Calu3 (cell line): ENCODE measurements at regions of chr1 and their contacts with region 1.

Region 1: GRCh38 chr1:243343970-243344937 is 88.4 kb downstream of the SDCCAG8 start:
- DNase-seq: peak; percentile 6
- H3K4me3 Mint-ChIP-seq: no peak overlapping the region
- H3K27ac Mint-ChIP-seq: no peak overlapping the region
- H3K4me1 Mint-ChIP-seq: peaks cover 9% of the 10 kb centered on the region
- H3K27me3 Mint-ChIP-seq: no peaks in the 10 kb centered on the region
- CTCF ChIP-seq: peak; percentile 43

Region 2: DNA sequence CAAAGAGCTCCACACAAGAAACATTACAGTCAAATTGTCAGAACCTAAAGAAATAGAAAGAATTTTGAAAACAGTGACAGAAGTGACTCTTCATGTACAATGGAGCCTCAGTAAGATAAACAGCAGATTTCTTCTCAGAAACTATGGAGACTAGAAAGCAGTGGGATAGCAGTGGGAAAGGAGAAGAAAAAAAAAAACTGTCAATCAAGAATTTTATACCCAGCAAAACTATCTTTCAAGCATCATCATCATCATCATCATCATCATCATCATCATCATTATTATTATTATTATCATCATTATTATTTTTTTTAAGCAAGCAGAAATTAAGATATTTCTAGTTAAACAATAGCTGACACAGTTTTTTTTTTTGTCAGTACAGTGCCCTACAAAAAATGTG is 113.3 kb before region 1 on chr1:
- CTCF ChIA-PET with region 1: no interaction called
- intact Hi-C with region 1: no loop called
- DNase-seq: no peak
- H3K4me3 Mint-ChIP-seq: no peak overlapping the region
- H3K27ac Mint-ChIP-seq: no peak overlapping the region
- H3K4me1 Mint-ChIP-seq: no peaks in the 10 kb centered on the region
- H3K27me3 Mint-ChIP-seq: no peaks in the 10 kb centered on the region
- CTCF ChIP-seq: no peak

Region 3: GRCh38 chr1:243409284-243409683 is 65.0 kb after region 1 on chr1:
- CTCF ChIA-PET with region 1: interaction called, 32 read pairs
- intact Hi-C with region 1: loop called (anchors 1 kb)
- DNase-seq: peak; percentile 37
- H3K4me3 Mint-ChIP-seq: no peak overlapping the region
- H3K27ac Mint-ChIP-seq: no peak overlapping the region
- H3K4me1 Mint-ChIP-seq: peaks cover 13% of the 10 kb centered on the region
- H3K27me3 Mint-ChIP-seq: no peaks in the 10 kb centered on the region
- CTCF ChIP-seq: peak; percentile 33

Region 4: DNA sequence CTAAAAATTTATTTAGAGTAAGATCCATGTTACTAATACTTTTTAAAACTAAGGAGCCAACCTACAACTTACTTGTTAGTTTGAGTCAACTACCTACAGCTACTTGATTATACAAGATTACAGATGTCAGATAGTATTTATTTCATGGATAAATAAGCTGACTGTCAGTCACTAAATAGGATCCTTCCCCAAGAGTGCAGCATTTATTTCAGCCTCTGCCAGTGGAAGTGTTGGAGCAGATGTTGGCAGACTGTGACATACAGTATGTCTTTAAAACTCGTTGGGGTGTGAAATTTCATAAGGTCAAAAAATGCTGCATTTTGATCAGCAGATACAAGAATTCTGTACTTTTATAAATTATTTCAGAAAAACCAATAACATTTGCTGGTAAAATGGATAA is 349.5 kb after region 1 on chr1:
- CTCF ChIA-PET with region 1: no interaction called
- intact Hi-C with region 1: loop called (anchors 10 kb)
- DNase-seq: no peak
- H3K4me3 Mint-ChIP-seq: no peak overlapping the region
- H3K27ac Mint-ChIP-seq: no peak overlapping the region
- H3K4me1 Mint-ChIP-seq: no peaks in the 10 kb centered on the region
- H3K27me3 Mint-ChIP-seq: no peaks in the 10 kb centered on the region
- CTCF ChIP-seq: no peak

Region 5: DNA sequence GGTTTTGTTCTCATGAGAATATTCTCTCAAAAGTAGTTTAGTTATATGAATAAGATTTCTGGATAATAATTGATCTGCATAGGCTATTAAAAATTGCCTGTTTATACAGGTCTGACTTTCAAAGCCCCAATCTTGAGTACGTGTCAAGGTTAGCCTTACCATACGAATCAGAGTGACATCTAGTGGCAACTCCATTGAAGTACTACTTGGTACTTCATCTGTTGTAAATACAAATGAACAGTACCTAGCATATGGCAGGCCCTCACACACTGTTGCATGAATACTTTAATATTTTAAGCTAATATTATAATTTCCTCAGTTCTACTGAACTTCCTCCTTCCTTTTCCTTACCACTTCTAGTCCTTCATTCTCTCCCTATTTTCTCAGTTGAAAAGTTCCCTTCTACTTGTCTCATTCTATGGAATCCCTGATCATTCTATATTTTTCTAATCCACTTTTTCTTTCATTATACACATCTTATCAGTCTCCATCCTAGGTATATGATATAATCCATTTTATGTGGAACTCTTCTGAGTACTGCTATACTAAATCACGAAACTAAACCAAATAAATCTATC is 404.5 kb after region 1 on chr1:
- CTCF ChIA-PET with region 1: no interaction called
- intact Hi-C with region 1: loop called (anchors 2 kb)
- DNase-seq: peak; percentile 45
- H3K4me3 Mint-ChIP-seq: no peak overlapping the region
- H3K27ac Mint-ChIP-seq: no peak overlapping the region
- H3K4me1 Mint-ChIP-seq: no peaks in the 10 kb centered on the region
- H3K27me3 Mint-ChIP-seq: no peaks in the 10 kb centered on the region
- CTCF ChIP-seq: peak; percentile 67

Region 6: GRCh38 chr1:243850452-243851256 is 506.4 kb after region 1 on chr1:
- CTCF ChIA-PET with region 1: no interaction called
- intact Hi-C with region 1: loop called (anchors 10 kb)
- DNase-seq: peak; percentile 84
- H3K4me3 Mint-ChIP-seq: peak overlapping the region; percentile 96
- H3K27ac Mint-ChIP-seq: peak overlapping the region; percentile 84
- H3K4me1 Mint-ChIP-seq: peaks cover 24% of the 10 kb centered on the region
- H3K27me3 Mint-ChIP-seq: no peaks in the 10 kb centered on the region
- CTCF ChIP-seq: no peak

Region 7: DNA sequence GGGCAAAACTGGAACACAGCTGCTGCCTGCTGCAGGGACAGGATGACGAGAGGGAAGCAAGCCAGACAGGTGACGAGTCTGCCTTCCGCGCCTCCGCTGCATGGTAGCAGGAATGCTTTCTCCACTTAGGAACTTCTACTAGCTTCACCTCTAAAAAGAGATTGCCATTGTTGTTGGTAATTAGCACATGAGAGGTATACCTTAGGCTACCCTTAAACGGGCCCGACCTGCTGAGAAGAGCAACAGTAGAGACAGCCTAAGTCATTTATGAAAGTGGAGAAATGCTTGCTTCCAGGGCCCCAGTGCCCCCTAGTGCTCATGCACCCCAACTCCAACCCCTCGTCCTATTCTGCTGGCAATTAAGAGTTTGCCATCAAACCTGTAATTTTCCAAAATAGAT is 602.7 kb after region 1 on chr1:
- CTCF ChIA-PET with region 1: no interaction called
- intact Hi-C with region 1: loop called (anchors 2 kb)
- DNase-seq: peak; percentile 58
- H3K4me3 Mint-ChIP-seq: no peak overlapping the region
- H3K27ac Mint-ChIP-seq: no peak overlapping the region
- H3K4me1 Mint-ChIP-seq: peaks cover 25% of the 10 kb centered on the region
- H3K27me3 Mint-ChIP-seq: no peaks in the 10 kb centered on the region
- CTCF ChIP-seq: peak; percentile 59